ENCODE measurements at regions of chr6 and their contacts with region 1.

Region 1: GRCh38 chr6:113858480-113859348 is 1.6 kb downstream of the MARCKS start:
- DNase-seq: peak; percentile 95 to 96
- H3K4me3 ChIP-seq: peak overlapping the region; percentile 64
- H3K4me3 Mint-ChIP-seq: no peak overlapping the region
- H3K27ac Mint-ChIP-seq: no peak overlapping the region
- H3K4me1 ChIP-seq: peaks cover 3% of the 10 kb centered on the region
- H3K4me1 Mint-ChIP-seq: no peaks in the 10 kb centered on the region
- H3K27me3 ChIP-seq: no peaks in the 10 kb centered on the region
- H3K27me3 Mint-ChIP-seq: no peaks in the 10 kb centered on the region
- CTCF ChIP-seq: peak; percentile 82 to 90

Region 2: DNA sequence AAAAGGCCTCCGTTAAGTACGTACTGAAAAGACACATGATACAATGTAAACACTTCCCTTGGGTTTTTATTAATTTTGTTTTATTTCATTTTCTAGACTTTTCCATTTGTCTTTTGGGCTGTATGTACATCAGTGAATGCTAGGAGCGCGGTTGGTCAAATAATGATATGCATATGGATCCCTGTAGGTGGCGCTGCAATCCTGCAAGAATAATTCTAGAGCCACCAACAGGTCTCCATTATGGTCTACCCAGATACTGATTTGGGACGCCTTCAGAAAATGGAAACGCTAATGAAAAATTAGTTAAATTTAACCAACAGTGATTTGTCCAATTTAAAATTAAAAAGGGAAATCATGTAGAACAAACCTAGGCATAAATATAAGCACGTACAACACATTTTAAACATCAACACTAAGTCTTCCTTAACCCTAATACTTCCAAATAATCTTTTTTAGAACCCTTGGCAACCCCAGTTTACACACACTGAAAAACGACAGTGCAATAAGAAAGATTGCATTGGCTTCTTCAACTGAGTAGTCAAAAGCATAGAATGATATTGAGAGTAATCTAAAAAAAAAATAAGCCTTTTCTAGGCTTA is 1078.1 kb before region 1 on chr6:
- CTCF ChIA-PET with region 1: no interaction called
- POLR2A ChIA-PET with region 1: no interaction called
- intact Hi-C with region 1: loop called (anchors 1 kb)
- DNase-seq: peak; percentile 62 to 74
- H3K4me3 ChIP-seq: no peak overlapping the region
- H3K4me3 Mint-ChIP-seq: no peak overlapping the region
- H3K27ac Mint-ChIP-seq: no peak overlapping the region
- H3K4me1 ChIP-seq: no peaks in the 10 kb centered on the region
- H3K4me1 Mint-ChIP-seq: no peaks in the 10 kb centered on the region
- H3K27me3 ChIP-seq: no peaks in the 10 kb centered on the region
- H3K27me3 Mint-ChIP-seq: peaks cover 5% of the 10 kb centered on the region
- CTCF ChIP-seq: peak; percentile 74 to 84

Region 3: DNA sequence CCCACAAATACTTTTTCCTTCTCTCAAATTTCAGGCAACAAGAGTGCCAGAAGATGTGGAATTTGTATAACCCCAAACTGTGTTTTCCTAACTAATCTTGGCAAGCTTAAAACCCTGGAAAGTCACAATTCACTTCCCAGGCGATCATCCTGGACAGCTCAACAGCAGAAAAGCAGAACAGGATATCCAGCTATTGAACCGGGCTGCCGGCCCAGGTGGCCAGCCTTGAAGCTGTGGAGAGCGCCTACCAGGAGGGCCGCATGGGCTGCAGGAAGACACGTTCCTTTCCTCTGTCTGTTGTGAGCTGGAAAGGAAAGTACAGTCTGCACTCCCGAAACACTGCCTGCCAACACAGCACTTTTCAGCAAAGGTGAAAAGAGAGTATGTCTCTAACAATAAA is 721.3 kb before region 1 on chr6:
- CTCF ChIA-PET with region 1: no interaction called
- POLR2A ChIA-PET with region 1: no interaction called
- intact Hi-C with region 1: no loop called
- DNase-seq: no peak
- H3K4me3 ChIP-seq: no peak overlapping the region
- H3K4me3 Mint-ChIP-seq: no peak overlapping the region
- H3K27ac Mint-ChIP-seq: no peak overlapping the region
- H3K4me1 ChIP-seq: no peaks in the 10 kb centered on the region
- H3K4me1 Mint-ChIP-seq: no peaks in the 10 kb centered on the region
- H3K27me3 ChIP-seq: no peaks in the 10 kb centered on the region
- H3K27me3 Mint-ChIP-seq: peaks cover 6% of the 10 kb centered on the region
- CTCF ChIP-seq: no peak

Region 4: DNA sequence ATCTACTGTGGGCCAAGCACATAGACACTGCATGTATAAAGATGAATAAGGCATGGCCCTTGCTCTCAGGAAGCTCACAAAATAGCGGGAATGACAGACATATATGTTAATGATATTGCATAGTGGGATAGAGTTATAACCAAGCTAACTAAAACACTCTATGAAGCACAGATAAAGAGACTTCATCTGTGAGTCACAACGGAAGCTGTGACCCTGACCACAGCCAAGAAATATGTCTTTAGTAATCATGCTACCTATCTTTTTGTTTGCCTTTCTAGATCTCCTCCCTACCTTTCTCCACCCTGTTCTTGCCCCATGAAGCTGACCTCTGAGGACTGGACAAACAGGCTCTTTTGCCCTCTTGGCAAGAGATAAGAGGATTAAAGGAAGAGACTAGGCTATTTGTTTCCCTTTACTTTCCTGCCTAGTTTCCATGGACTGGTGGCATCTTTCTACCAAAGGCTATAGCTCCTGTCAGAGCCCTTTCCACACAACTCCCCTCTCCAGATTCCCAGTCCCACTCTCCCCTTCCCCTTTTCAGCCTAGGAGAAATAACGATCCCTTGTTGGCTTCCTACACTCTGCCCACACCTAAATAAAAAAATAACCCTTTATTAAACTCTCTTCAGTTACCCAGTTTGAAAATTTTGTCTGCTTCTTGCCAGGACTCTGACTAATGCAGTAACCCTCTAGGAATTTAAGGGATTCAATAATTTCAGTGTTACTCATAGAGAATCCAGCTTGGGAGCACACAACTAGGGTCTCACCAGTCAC is 506.5 kb before region 1 on chr6:
- CTCF ChIA-PET with region 1: interaction called, 5 read pairs
- POLR2A ChIA-PET with region 1: interaction called, 3 read pairs
- intact Hi-C with region 1: loop called (anchors 1 kb)
- DNase-seq: peak; percentile 90 to 96
- H3K4me3 ChIP-seq: no peak overlapping the region
- H3K4me3 Mint-ChIP-seq: peak overlapping the region; percentile 65
- H3K27ac Mint-ChIP-seq: peak overlapping the region; percentile 98
- H3K4me1 ChIP-seq: peaks cover 67% of the 10 kb centered on the region
- H3K4me1 Mint-ChIP-seq: peaks cover 67% of the 10 kb centered on the region
- H3K27me3 ChIP-seq: no peaks in the 10 kb centered on the region
- H3K27me3 Mint-ChIP-seq: no peaks in the 10 kb centered on the region
- CTCF ChIP-seq: no peak

Region 5: DNA sequence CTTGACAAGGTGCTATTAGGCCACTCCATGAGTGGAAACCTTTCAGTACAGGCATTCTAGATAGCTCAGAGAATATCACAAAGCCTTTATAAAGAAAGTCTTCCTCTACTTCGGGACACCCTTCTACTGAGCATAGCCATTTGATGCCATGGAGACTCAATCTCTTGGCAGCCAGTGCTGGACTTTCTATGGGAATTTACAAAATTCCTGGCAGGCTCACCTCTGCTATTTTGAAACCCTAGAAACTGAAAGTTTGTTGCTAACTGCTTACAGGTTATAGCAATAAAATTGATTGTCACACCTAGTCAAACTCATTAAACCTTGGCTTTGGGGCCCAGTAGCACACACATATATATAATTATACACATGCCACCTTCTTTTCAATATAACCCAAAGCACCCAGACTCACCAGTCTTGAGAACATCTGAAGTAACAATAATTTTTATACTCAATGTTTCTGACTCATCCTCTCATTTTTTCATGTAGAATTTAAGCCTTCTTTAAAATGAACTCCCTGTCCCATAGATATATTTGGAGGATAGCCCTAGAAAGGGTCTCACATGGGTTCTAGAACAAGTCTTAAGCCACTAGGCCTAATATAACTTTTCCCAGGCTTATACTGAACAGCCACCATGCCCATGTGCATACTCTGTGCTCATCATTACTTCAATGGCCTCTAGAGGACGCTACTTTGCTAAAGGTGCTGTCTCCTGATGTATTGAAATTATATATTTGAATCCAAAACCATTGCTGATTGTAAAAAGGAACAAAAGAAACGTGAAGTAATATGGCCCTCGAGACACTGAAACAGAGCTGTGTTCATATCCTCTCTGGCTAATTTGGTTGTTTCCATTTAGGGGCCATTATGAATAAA is 369.7 kb before region 1 on chr6:
- CTCF ChIA-PET with region 1: interaction called, 3 read pairs
- POLR2A ChIA-PET with region 1: no interaction called
- intact Hi-C with region 1: loop called (anchors 5 kb)
- DNase-seq: no peak
- H3K4me3 ChIP-seq: no peak overlapping the region
- H3K4me3 Mint-ChIP-seq: no peak overlapping the region
- H3K27ac Mint-ChIP-seq: no peak overlapping the region
- H3K4me1 ChIP-seq: no peaks in the 10 kb centered on the region
- H3K4me1 Mint-ChIP-seq: no peaks in the 10 kb centered on the region
- H3K27me3 ChIP-seq: no peaks in the 10 kb centered on the region
- H3K27me3 Mint-ChIP-seq: no peaks in the 10 kb centered on the region
- CTCF ChIP-seq: no peak

Region 6: GRCh38 chr6:113642714-113643406 is 215.9 kb before region 1 on chr6:
- CTCF ChIA-PET with region 1: interaction called, 32 read pairs
- POLR2A ChIA-PET with region 1: interaction called, 11 read pairs
- intact Hi-C with region 1: loop called (anchors 1 kb)
- DNase-seq: peak; percentile 92 to 97
- H3K4me3 ChIP-seq: no peak overlapping the region
- H3K4me3 Mint-ChIP-seq: peak overlapping the region; percentile 62
- H3K27ac Mint-ChIP-seq: peak overlapping the region; percentile 86
- H3K4me1 ChIP-seq: peaks cover 62% of the 10 kb centered on the region
- H3K4me1 Mint-ChIP-seq: peaks cover 29% of the 10 kb centered on the region
- H3K27me3 ChIP-seq: no peaks in the 10 kb centered on the region
- H3K27me3 Mint-ChIP-seq: no peaks in the 10 kb centered on the region
- CTCF ChIP-seq: no peak

Region 7: DNA sequence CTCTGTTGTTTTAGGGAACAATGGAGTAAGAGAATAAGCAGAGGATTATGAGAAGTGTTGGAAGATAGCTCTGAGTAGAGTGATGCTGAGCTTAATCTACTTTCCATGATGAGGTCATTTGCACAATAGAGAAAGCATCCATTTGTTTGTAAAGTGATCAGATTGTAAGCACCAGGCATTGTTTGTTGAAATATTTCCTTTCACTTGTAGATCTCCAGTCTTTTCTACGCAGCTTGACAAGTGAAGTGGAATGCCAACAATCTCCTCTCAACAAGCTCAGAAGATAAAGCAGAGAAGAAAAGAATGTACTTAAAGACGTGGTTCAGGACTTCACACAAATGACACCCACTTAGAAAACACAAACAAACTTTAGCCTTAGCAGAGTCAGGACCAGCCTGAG is 81.7 kb before region 1 on chr6:
- CTCF ChIA-PET with region 1: interaction called, 5 read pairs
- POLR2A ChIA-PET with region 1: interaction called, 4 read pairs
- intact Hi-C with region 1: loop called (anchors 1 kb)
- DNase-seq: peak in 1 of 2 experiments; percentile 37
- H3K4me3 ChIP-seq: no peak overlapping the region
- H3K4me3 Mint-ChIP-seq: peak overlapping the region; percentile 69
- H3K27ac Mint-ChIP-seq: peak overlapping the region; percentile 93
- H3K4me1 ChIP-seq: peaks cover 38% of the 10 kb centered on the region
- H3K4me1 Mint-ChIP-seq: peaks cover 23% of the 10 kb centered on the region
- H3K27me3 ChIP-seq: no peaks in the 10 kb centered on the region
- H3K27me3 Mint-ChIP-seq: no peaks in the 10 kb centered on the region
- CTCF ChIP-seq: no peak

Region 8: DNA sequence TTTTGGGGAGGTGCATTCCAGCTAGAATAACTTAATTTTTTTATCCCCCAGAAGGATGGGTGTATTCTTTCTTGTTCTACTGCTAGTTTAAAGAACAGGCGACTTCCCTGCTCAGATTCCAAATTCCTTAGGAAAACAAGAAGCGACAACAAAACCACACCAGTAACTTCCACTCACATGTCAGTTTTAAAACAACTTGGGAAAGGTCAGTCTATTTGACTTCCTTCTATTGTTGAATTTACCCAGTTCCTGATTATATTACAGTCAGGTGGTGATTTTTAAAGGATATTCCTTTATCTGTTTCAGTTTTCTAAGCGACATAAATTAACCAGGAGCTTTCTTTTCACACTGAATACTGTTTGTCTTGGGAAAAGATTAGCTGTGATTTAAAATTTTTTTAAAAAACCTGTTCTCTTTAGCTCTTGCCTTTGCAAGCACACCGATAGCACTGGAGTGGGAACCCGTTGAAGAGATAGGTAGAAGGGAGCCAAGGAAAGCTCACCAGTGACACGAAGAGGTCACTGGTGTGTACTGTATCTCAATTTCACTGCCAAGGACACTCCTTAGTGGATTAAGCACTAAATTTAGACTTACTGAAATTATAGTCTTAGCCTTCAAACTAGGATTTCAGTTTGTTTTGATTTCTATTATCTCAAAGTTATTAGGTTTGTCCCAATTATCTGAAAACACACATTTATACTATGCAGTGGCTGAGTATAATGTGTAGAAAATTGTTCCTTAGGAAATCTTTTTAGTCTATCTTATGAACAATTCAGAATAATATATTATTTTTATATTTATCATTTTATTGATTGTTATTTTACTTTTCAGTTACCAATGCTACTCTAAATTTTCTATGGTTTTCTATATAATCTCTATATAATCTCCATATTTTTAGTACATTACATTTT is 20.7 kb after region 1 on chr6:
- CTCF ChIA-PET with region 1: interaction called, 13 read pairs
- POLR2A ChIA-PET with region 1: interaction called, 5 read pairs
- intact Hi-C with region 1: no loop called
- DNase-seq: peak; percentile 60 to 68
- H3K4me3 ChIP-seq: no peak overlapping the region
- H3K4me3 Mint-ChIP-seq: no peak overlapping the region
- H3K27ac Mint-ChIP-seq: no peak overlapping the region
- H3K4me1 ChIP-seq: peaks cover 18% of the 10 kb centered on the region
- H3K4me1 Mint-ChIP-seq: peaks cover 8% of the 10 kb centered on the region
- H3K27me3 ChIP-seq: no peaks in the 10 kb centered on the region
- H3K27me3 Mint-ChIP-seq: no peaks in the 10 kb centered on the region
- CTCF ChIP-seq: peak; percentile 78 to 81

Measured in Caco-2 (cell line).